ENCODE measurements at regions of chr7 and their contacts with region 1.

Region 1: DNA sequence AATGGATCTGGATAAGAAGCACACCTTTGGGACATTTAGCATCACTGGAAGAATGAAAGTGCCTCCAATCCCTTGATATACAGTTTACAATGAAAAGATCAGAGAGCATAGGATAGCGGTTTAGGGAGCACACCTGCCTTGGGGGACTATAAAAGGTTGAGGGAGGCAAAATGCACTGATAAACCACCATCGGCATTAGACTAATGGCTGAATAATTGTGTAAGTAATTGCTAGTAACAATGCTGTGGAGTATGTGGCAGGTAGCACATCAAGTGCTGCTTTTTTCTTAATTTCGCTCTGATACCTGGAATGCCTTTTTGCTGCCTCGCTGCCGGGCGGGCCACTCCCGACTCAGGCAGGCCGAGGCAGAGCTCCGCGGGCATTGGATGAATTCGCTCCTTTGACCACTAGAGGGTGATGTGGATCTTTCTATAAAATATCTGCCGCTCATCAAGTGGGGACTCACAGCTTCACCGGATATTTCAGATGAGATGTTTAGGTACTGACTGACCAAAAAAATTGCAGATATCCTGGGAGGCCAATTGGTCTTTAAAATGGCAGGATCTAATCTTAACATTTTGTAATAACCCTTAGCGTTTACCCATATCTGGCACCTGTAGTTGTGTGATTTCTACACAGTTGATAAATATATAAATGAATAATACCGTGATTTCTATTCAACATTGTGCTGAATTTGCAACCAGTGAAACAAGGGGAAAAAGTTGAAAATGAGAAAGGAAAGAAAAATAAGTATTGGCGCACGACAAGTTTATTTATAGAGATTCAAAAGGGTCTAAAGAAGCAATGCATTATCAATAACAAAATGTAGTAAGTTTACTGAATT is 116.8 kb upstream of the PRSS1 start:
- DNase-seq: peak; percentile 44
- ATAC-seq: peak; percentile 97
- H3K4me3 Mint-ChIP-seq: no peak overlapping the region
- H3K27ac Mint-ChIP-seq: no peak overlapping the region
- H3K4me1 Mint-ChIP-seq: peaks cover 2% of the 10 kb centered on the region
- H3K27me3 Mint-ChIP-seq: peaks cover 16% of the 10 kb centered on the region
- CTCF ChIP-seq: peak; percentile 89

Region 2: DNA sequence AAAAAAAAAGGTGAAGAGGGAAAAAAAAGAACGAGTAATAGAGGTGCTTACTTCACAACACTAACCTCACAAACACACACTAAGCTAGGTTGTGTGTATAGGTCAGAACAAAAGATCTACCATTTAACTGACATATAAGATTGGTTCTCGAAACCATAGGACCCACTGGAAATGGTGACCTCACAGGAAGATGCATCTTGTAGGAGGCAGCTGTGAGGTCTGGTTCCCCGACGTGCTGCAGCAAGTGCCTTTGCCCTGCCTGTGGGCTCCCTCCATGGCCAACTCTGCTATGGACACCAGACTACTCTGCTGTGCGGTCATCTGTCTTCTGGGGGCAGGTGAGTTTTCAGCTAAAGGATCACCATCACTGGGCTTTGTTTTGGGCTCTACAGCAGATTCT is 17.0 kb before region 1 on chr7:
- CTCF ChIA-PET with region 1: no interaction called
- POLR2A ChIA-PET with region 1: no interaction called
- intact Hi-C with region 1: no loop called
- DNase-seq: no peak
- ATAC-seq: no peak
- H3K4me3 Mint-ChIP-seq: no peak overlapping the region
- H3K27ac Mint-ChIP-seq: no peak overlapping the region
- H3K4me1 Mint-ChIP-seq: no peaks in the 10 kb centered on the region
- H3K27me3 Mint-ChIP-seq: peaks cover 41% of the 10 kb centered on the region
- CTCF ChIP-seq: no peak

Region 3: DNA sequence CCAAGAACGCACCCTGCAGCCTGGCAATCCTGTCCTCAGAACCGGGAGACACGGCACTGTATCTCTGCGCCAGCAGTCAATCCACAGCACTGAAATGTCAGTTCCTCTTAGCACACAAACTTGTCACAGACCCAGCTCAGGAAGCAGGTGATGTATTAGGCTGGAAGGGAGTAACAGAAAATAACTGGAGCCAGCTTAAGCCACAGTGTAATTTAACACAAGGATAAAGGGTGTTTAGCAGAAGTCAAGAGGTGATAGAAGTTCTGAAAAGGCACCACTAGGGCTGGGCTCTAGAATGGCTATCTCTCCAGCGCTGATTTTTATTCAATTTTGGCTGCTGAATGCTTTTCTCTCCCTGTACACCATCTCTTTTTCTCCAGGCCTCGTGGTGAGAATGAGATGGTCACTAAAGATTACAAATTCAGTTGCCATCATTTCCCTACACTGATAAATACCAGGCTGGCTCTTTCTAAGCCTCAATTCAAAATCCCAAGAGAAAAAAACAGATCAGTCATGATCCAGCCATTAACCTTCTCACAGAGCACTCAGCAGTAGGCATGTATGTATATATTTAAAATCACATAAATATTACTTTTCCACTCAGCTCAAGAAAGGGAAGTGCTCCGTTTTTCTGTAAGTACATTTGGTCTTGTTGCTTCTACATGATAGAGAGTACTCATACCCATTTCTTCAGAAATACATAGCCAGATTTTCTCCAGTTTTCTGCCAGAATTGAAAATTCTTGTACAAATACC is 14.1 kb after region 1 on chr7:
- CTCF ChIA-PET with region 1: interaction called, 12 read pairs
- POLR2A ChIA-PET with region 1: no interaction called
- intact Hi-C with region 1: no loop called
- DNase-seq: no peak
- ATAC-seq: peak; percentile 28
- H3K4me3 Mint-ChIP-seq: peak overlapping the region; percentile 36
- H3K27ac Mint-ChIP-seq: no peak overlapping the region
- H3K4me1 Mint-ChIP-seq: peaks cover 13% of the 10 kb centered on the region
- H3K27me3 Mint-ChIP-seq: peaks cover 52% of the 10 kb centered on the region
- CTCF ChIP-seq: no peak

Region 4: GRCh38 chr7:142790555-142790954 is 158.0 kb after region 1 on chr7:
- CTCF ChIA-PET with region 1: interaction called, 11 read pairs
- POLR2A ChIA-PET with region 1: no interaction called
- intact Hi-C with region 1: no loop called
- DNase-seq: no peak
- ATAC-seq: no peak
- H3K4me3 Mint-ChIP-seq: no peak overlapping the region
- H3K27ac Mint-ChIP-seq: no peak overlapping the region
- H3K4me1 Mint-ChIP-seq: peaks cover 78% of the 10 kb centered on the region
- H3K27me3 Mint-ChIP-seq: no peaks in the 10 kb centered on the region
- CTCF ChIP-seq: no peak

Region 5: DNA sequence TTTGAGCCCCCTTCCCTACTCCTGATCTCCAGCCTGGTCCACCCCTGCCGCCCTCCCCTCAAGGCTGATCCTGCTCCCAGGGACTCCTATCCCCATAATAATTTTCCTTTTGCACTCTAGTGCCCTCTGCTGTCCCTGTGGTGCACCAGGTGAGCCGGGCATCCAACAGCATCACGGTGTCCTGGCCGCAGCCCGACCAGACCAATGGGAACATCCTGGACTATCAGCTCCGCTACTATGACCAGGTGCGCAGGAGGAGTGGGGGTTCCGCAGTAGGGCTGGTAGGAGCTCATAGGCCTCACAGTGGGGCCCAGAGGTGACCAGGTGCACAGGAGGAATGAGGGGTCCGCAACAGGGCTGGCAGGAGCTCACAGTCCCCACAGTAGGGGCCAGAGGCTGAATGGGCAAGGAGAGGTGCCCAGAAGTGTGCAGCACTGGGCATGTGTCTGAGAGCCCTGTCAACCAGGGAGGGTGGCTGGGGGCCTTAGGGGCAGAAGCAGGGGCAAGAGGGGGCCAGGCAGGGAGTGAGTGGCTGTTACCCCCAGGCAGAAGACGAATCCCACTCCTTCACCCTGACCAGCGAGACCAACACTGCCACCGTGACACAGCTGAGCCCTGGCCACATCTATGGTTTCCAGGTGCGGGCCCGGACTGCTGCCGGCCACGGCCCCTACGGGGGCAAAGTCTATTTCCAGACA is 234.0 kb after region 1 on chr7:
- CTCF ChIA-PET with region 1: interaction called, 28 read pairs
- POLR2A ChIA-PET with region 1: no interaction called
- intact Hi-C with region 1: loop called (anchors 1 kb)
- DNase-seq: no peak
- ATAC-seq: peak; percentile 34
- H3K4me3 Mint-ChIP-seq: no peak overlapping the region
- H3K27ac Mint-ChIP-seq: no peak overlapping the region
- H3K4me1 Mint-ChIP-seq: no peaks in the 10 kb centered on the region
- H3K27me3 Mint-ChIP-seq: no peaks in the 10 kb centered on the region
- CTCF ChIP-seq: no peak

Region 6: GRCh38 chr7:142998966-142999365 is 366.5 kb after region 1 on chr7:
- CTCF ChIA-PET with region 1: interaction called, 85 read pairs
- POLR2A ChIA-PET with region 1: interaction called, 7 read pairs
- intact Hi-C with region 1: loop called (anchors 1 kb)
- DNase-seq: no peak
- ATAC-seq: no peak
- H3K4me3 Mint-ChIP-seq: no peak overlapping the region
- H3K27ac Mint-ChIP-seq: no peak overlapping the region
- H3K4me1 Mint-ChIP-seq: peaks cover 15% of the 10 kb centered on the region
- H3K27me3 Mint-ChIP-seq: no peaks in the 10 kb centered on the region
- CTCF ChIP-seq: no peak

Region 7: GRCh38 chr7:143929224-143929920 is 1296.9 kb after region 1 on chr7:
- CTCF ChIA-PET with region 1: no interaction called
- POLR2A ChIA-PET with region 1: no interaction called
- intact Hi-C with region 1: no loop called
- DNase-seq: no peak
- ATAC-seq: no peak
- H3K4me3 Mint-ChIP-seq: no peak overlapping the region
- H3K27ac Mint-ChIP-seq: no peak overlapping the region
- H3K4me1 Mint-ChIP-seq: no peaks in the 10 kb centered on the region
- H3K27me3 Mint-ChIP-seq: peaks cover 5% of the 10 kb centered on the region
- CTCF ChIP-seq: no peak

Measured in activated B cell treated with CpG ODN at 0.5 μM for 24 hours (primary cell).